Activated CD4-positive, alpha-beta memory T cell treated with anti-CD3 and anti-CD28 coated beads for 36 hours (primary cell): ENCODE measurements at regions of chr11 and their contacts with region 1.

Region 1: GRCh38 chr11:101914738-101915426 is at the start of gene CEP126:
- DNase-seq: peak; percentile 96
- H3K4me3 Mint-ChIP-seq: peak within 1 kb of the TSS; percentile 91
- H3K27ac Mint-ChIP-seq: peak within 1 kb of the TSS; percentile 64
- H3K4me1 Mint-ChIP-seq: peaks cover 20% of the 10 kb centered on the region
- H3K27me3 Mint-ChIP-seq: no peaks in the 10 kb centered on the region
- total RNA-seq, gene CEP126: 1.1 to 1.8 TPM

Region 2: GRCh38 chr11:101974255-101974654 is 59.4 kb after region 1 on chr11:
- CTCF ChIA-PET with region 1: no interaction called
- POLR2A ChIA-PET with region 1: no interaction called
- intact Hi-C with region 1: no loop called
- DNase-seq: no peak
- H3K4me3 Mint-ChIP-seq: no peak overlapping the region
- H3K27ac Mint-ChIP-seq: no peak overlapping the region
- H3K4me1 Mint-ChIP-seq: no peaks in the 10 kb centered on the region
- H3K27me3 Mint-ChIP-seq: no peaks in the 10 kb centered on the region

Region 3: GRCh38 chr11:102007567-102008437 is 92.9 kb after region 1 on chr11:
- CTCF ChIA-PET with region 1: interaction called, 7 read pairs
- POLR2A ChIA-PET with region 1: no interaction called
- intact Hi-C with region 1: loop called (anchors 5 kb)
- DNase-seq: no peak
- H3K4me3 Mint-ChIP-seq: no peak overlapping the region
- H3K27ac Mint-ChIP-seq: no peak overlapping the region
- H3K4me1 Mint-ChIP-seq: peaks cover 8% of the 10 kb centered on the region
- H3K27me3 Mint-ChIP-seq: peaks cover 8% of the 10 kb centered on the region

Region 4: GRCh38 chr11:102109896-102110760 is 195.2 kb after region 1 on chr11 and contains the start of gene YAP1:
- CTCF ChIA-PET with region 1: no interaction called
- POLR2A ChIA-PET with region 1: no interaction called
- intact Hi-C with region 1: loop called (anchors 2 kb)
- DNase-seq: peak; percentile 75
- H3K4me3 Mint-ChIP-seq: peak within 1 kb of the TSS; percentile 90
- H3K27ac Mint-ChIP-seq: no peak within 1 kb of the TSS
- H3K4me1 Mint-ChIP-seq: peaks cover 9% of the 10 kb centered on the region
- H3K27me3 Mint-ChIP-seq: peaks cover 23% of the 10 kb centered on the region
- total RNA-seq, gene YAP1: 0.24 to 0.71 TPM

Region 5: GRCh38 chr11:102268329-102269193 is 353.7 kb after region 1 on chr11:
- CTCF ChIA-PET with region 1: no interaction called
- POLR2A ChIA-PET with region 1: no interaction called
- intact Hi-C with region 1: loop called (anchors 2 kb)
- DNase-seq: peak; percentile 92
- H3K4me3 Mint-ChIP-seq: peak overlapping the region; percentile 24
- H3K27ac Mint-ChIP-seq: no peak overlapping the region
- H3K4me1 Mint-ChIP-seq: peaks cover 31% of the 10 kb centered on the region
- H3K27me3 Mint-ChIP-seq: no peaks in the 10 kb centered on the region

Region 6: DNA sequence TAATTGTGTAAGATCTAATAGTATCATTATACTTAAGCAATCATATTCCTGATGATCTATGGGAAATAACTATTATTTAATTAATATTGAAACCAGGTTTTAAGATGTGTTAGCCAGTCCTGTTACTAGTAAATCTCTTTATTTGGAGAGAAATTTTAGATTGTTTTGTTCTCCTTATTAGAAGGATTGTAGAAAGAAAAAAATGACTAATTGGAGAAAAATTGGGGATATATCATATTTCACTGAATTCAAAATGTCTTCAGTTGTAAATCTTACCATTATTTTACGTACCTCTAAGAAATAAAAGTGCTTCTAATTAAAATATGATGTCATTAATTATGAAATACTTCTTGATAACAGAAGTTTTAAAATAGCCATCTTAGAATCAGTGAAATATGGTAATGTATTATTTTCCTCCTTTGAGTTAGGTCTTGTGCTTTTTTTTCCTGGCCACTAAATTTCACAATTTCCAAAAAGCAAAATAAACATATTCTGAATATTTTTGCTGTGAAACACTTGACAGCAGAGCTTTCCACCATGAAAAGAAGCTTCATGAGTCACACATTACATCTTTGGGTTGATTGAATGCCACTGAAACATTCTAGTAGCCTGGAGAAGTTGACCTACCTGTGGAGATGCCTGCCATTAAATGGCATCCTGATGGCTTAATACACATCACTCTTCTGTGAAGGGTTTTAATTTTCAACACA is 408.8 kb after region 1 on chr11:
- CTCF ChIA-PET with region 1: no interaction called
- POLR2A ChIA-PET with region 1: no interaction called
- intact Hi-C with region 1: loop called (anchors 10 kb)
- DNase-seq: no peak
- H3K4me3 Mint-ChIP-seq: no peak overlapping the region
- H3K27ac Mint-ChIP-seq: peak overlapping the region; percentile 72
- H3K4me1 Mint-ChIP-seq: peaks cover 51% of the 10 kb centered on the region
- H3K27me3 Mint-ChIP-seq: no peaks in the 10 kb centered on the region

Region 7: GRCh38 chr11:103024086-103024485 is 1109.2 kb after region 1 on chr11:
- CTCF ChIA-PET with region 1: no interaction called
- POLR2A ChIA-PET with region 1: no interaction called
- intact Hi-C with region 1: loop called (anchors 10 kb)
- DNase-seq: no peak
- H3K4me3 Mint-ChIP-seq: no peak overlapping the region
- H3K27ac Mint-ChIP-seq: no peak overlapping the region
- H3K4me1 Mint-ChIP-seq: peaks cover 8% of the 10 kb centered on the region
- H3K27me3 Mint-ChIP-seq: peaks cover 8% of the 10 kb centered on the region